Naive thymus-derived CD4-positive, alpha-beta T cell (primary cell): ENCODE measurements at regions of chr12 and their contacts with region 1.

Region 1: DNA sequence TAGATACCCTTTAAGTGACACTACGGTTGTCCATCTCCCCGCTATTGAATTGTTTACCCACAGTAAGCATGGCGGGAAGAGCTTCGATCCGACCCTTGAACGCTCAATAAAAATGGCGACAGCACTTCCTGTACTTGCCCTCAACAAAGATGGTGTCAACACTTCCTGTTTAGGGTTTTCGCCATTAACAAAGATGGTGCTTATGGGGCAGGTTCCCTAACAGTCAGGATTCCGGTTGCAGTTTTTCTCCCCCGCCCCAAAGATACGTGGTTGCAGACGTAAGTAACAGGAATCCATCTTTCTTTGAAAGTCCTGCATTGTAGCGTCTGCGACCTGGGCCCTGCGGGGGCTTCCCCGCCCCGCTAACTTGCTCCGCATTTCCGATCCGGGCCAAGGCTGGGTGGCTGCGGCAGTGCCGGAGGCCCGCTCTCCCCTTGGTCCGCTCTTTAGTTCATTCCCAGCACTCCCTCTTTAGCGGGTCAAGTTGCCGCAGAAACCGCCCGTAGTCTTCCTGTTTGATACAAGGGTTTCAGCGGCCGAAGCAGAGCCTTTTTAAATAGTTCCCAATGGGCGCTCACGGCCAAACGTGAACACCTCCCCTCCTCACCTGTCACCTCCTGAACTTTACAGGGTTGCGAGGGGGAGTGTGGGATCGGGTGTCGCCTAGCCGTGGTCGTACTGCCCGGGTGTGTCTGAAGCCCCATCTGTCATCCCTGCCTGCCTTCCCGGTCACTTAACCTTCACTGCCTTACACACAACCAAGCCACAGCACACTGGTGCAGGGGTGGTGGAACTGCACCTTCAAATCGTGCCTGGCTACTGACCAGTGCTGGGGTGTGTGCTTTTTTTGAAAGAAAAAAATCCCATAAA is at the start of gene CRADD:
- DNase-seq: peak; percentile 75 to 97 (median 95)
- ATAC-seq: peak; percentile 95
- H3K4me3 ChIP-seq: peak within 1 kb of the TSS; percentile 93
- H3K4me3 Mint-ChIP-seq: peak within 1 kb of the TSS; percentile 82 to 100 (median 98)
- H3K27ac ChIP-seq: peak within 1 kb of the TSS; percentile 99
- H3K27ac Mint-ChIP-seq: peak within 1 kb of the TSS; percentile 97 to 100 (median 100)
- H3K4me1 ChIP-seq: peaks cover 5 to 9% of the 10 kb centered on the region in 2 donors
- H3K4me1 Mint-ChIP-seq: peaks cover 19 to 56% (median 41%) of the 10 kb centered on the region in 7 donors
- H3K27me3 ChIP-seq: no peaks in the 10 kb centered on the region
- H3K27me3 Mint-ChIP-seq: peaks cover 2 to 13% (median 9%) of the 10 kb centered on the region in 5 donors
- total RNA-seq, gene CRADD: 11.4 to 17.1 (median 13.8) TPM

Region 2: DNA sequence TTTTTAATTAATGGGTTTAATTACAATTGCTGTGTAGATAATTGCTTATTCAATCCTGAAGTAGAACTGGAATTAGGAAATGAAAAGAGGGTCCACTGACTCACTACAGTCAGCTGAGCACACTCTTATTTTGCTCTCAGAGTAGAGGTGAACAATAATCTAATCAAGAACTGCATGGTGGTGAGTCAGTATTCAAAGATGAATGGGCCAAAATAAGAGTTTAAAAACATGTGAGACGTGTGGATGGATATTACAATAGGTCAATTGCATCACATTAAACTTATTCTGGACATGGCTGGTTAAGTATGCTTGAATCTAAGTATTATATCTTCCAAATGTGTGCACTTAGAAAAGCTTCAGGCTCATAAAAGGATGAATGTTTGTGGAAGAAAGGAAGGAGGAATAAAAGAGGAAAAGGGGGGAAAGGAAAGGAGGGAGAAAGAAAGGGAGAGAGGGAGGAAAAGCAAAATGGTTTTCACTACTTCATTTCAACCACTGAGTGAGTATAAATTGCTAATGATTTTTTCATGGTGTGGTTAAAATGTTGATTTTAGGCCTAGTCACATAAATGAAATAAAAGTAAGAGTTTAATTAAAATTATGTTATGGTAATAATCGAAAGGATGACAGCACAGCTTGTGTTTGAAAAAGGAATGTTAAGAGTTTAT is 721.3 kb before region 1 on chr12:
- CTCF ChIA-PET with region 1: no interaction called
- POLR2A ChIA-PET with region 1: no interaction called
- intact Hi-C with region 1: no loop called
- DNase-seq: no peak
- ATAC-seq: no peak
- H3K4me3 ChIP-seq: no peak overlapping the region
- H3K4me3 Mint-ChIP-seq: no peak overlapping the region
- H3K27ac ChIP-seq: no peak overlapping the region
- H3K27ac Mint-ChIP-seq: no peak overlapping the region
- H3K4me1 ChIP-seq: no peaks in the 10 kb centered on the region
- H3K4me1 Mint-ChIP-seq: no peaks in the 10 kb centered on the region
- H3K27me3 ChIP-seq: no peaks in the 10 kb centered on the region
- H3K27me3 Mint-ChIP-seq: no peaks in the 10 kb centered on the region

Region 3: GRCh38 chr12:93378373-93379325 is 298.8 kb before region 1 on chr12:
- CTCF ChIA-PET with region 1: no interaction called
- POLR2A ChIA-PET with region 1: no interaction called
- intact Hi-C with region 1: loop called (anchors 1 to 5 kb)
- DNase-seq: peak; percentile 47 to 73 (median 69)
- ATAC-seq: peak; percentile 60
- H3K4me3 ChIP-seq: peak overlapping the region; percentile 76
- H3K4me3 Mint-ChIP-seq: peak overlapping the region; percentile 98 to 100 (median 99)
- H3K27ac ChIP-seq: peak overlapping the region; percentile 94
- H3K27ac Mint-ChIP-seq: peak overlapping the region; percentile 94 to 100 (median 99)
- H3K4me1 ChIP-seq: peaks cover 19 to 22% of the 10 kb centered on the region in 2 donors
- H3K4me1 Mint-ChIP-seq: peaks cover 34 to 62% (median 51%) of the 10 kb centered on the region in 7 donors
- H3K27me3 ChIP-seq: no peaks in the 10 kb centered on the region
- H3K27me3 Mint-ChIP-seq: no peaks in the 10 kb centered on the region

Region 4: DNA sequence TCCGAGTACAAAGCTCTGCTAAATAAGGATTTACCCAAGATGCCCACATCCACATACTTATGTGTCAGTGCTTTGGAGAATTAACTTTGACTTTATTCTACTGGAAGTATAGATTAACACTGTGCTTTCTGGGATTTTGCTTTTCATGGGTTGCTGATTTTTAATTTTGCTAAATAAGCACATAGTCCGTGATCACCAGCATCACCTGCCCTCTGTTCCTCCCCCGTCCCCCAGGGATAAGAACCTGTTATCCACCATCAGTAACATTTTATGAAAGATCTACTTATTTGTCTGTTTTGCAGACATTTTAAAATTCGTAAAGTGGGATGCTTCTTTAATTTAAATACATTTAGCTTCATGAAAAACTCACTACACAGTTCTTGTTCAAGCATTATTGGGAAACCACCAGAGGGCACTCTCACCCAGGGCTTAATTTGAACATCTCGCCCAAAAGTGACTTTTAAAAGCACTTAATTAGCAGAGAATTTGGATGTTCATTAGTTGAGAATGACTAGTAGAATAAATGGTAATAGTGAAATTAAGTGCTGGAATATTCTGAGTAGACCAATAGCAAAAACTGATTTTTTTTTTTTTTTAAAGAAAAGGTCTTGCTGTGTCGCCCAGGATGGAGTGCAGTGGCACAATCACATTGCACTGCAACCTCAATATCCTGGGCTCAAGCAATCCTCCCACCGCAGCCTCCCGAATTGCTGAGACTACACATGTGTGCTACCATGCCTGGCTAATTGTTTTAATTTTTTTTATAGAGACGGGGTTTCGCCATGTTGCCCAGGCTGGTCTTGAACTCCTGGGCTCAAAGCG is 174.4 kb before region 1 on chr12:
- CTCF ChIA-PET with region 1: no interaction called
- POLR2A ChIA-PET with region 1: no interaction called
- intact Hi-C with region 1: loop called in 1 of 2 experiments (anchors 5 kb)
- DNase-seq: peak; percentile 16 to 71 (median 54)
- ATAC-seq: peak; percentile 67
- H3K4me3 ChIP-seq: no peak overlapping the region
- H3K4me3 Mint-ChIP-seq: no peak overlapping the region
- H3K27ac ChIP-seq: no peak overlapping the region
- H3K27ac Mint-ChIP-seq: peak overlapping the region in 3 of 9 donors; percentile 36 to 69 (median 60)
- H3K4me1 ChIP-seq: no peaks in the 10 kb centered on the region
- H3K4me1 Mint-ChIP-seq: peaks cover 0 to 29% (median 0%) of the 10 kb centered on the region in 7 donors
- H3K27me3 ChIP-seq: no peaks in the 10 kb centered on the region
- H3K27me3 Mint-ChIP-seq: no peaks in the 10 kb centered on the region

Region 5: DNA sequence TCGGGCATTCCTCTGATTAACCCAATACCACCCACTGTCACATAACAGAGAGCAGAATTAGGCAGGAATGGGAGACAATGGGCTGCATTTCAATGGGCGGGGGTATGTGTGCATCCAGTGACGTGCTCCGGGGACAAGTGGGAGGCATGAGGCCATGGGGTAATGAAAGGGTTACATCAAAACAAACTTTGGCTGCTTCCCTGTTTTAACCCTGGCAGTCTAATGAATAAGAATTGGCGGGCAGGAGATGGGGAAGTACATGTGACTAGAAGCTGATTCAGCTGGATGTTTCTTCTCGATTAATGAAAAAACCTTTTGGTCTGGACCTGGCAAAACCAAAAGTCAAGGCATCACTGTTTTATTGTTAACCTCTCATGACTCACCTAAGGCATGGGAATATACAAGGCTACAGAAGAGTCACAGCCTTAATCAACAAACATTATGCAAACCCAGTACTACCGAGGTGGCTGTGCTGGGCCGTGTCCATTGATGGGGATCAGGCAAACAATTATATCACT is 60.8 kb before region 1 on chr12:
- CTCF ChIA-PET with region 1: no interaction called
- POLR2A ChIA-PET with region 1: no interaction called
- intact Hi-C with region 1: no loop called
- DNase-seq: no peak
- ATAC-seq: no peak
- H3K4me3 ChIP-seq: no peak overlapping the region
- H3K4me3 Mint-ChIP-seq: no peak overlapping the region
- H3K27ac ChIP-seq: no peak overlapping the region
- H3K27ac Mint-ChIP-seq: no peak overlapping the region
- H3K4me1 ChIP-seq: no peaks in the 10 kb centered on the region
- H3K4me1 Mint-ChIP-seq: peaks cover 0 to 2% (median 0%) of the 10 kb centered on the region in 7 donors
- H3K27me3 ChIP-seq: peaks cover 0 to 4% of the 10 kb centered on the region in 2 donors
- H3K27me3 Mint-ChIP-seq: peaks cover 0 to 22% (median 8%) of the 10 kb centered on the region in 5 donors

Region 6: DNA sequence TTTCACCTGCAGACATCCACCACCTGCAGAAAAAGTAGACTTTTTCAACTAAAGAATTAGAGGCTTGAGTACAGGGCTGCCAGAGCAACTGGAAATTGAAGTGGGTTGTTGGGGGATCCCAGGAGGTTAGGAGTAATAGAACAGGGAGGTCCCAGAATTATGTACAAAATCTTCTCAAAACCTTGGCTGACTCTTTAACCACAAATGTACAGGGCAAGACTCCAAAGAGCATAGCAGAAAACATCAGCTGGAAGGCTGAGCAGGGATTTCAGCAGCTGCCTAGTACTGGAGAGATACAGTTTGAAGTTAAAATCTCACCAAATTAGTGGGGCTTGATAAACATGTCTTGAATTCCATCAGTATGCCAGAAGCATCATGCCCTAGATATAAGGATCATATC is 191.3 kb after region 1 on chr12:
- CTCF ChIA-PET with region 1: no interaction called
- POLR2A ChIA-PET with region 1: no interaction called
- intact Hi-C with region 1: no loop called
- DNase-seq: no peak
- ATAC-seq: no peak
- H3K4me3 ChIP-seq: no peak overlapping the region
- H3K4me3 Mint-ChIP-seq: no peak overlapping the region
- H3K27ac ChIP-seq: no peak overlapping the region
- H3K27ac Mint-ChIP-seq: no peak overlapping the region
- H3K4me1 ChIP-seq: no peaks in the 10 kb centered on the region
- H3K4me1 Mint-ChIP-seq: no peaks in the 10 kb centered on the region
- H3K27me3 ChIP-seq: no peaks in the 10 kb centered on the region
- H3K27me3 Mint-ChIP-seq: peaks cover 0 to 20% (median 0%) of the 10 kb centered on the region in 5 donors

Region 7: GRCh38 chr12:93879476-93880421 is 202.3 kb after region 1 on chr12:
- CTCF ChIA-PET with region 1: no interaction called
- POLR2A ChIA-PET with region 1: no interaction called
- intact Hi-C with region 1: loop called in 1 of 2 experiments (anchors 1 kb)
- DNase-seq: no peak
- ATAC-seq: no peak
- H3K4me3 ChIP-seq: no peak overlapping the region
- H3K4me3 Mint-ChIP-seq: peak overlapping the region in 5 of 10 donors; percentile 5 to 71 (median 39)
- H3K27ac ChIP-seq: no peak overlapping the region
- H3K27ac Mint-ChIP-seq: peak overlapping the region in 8 of 9 donors; percentile 53 to 94 (median 72)
- H3K4me1 ChIP-seq: peaks cover 0 to 9% of the 10 kb centered on the region in 2 donors
- H3K4me1 Mint-ChIP-seq: peaks cover 7 to 39% (median 19%) of the 10 kb centered on the region in 7 donors
- H3K27me3 ChIP-seq: no peaks in the 10 kb centered on the region
- H3K27me3 Mint-ChIP-seq: peaks cover 0 to 3% (median 0%) of the 10 kb centered on the region in 5 donors

Region 8: GRCh38 chr12:94074980-94075928 is 397.8 kb after region 1 on chr12:
- CTCF ChIA-PET with region 1: no interaction called
- POLR2A ChIA-PET with region 1: interaction called, 5 read pairs
- intact Hi-C with region 1: loop called in 1 of 2 experiments (anchors 10 kb)
- DNase-seq: peak in 1 of 9 donors; percentile 20
- ATAC-seq: peak; percentile 67
- H3K4me3 ChIP-seq: no peak overlapping the region
- H3K4me3 Mint-ChIP-seq: no peak overlapping the region
- H3K27ac ChIP-seq: no peak overlapping the region
- H3K27ac Mint-ChIP-seq: no peak overlapping the region
- H3K4me1 ChIP-seq: peaks cover 0 to 20% of the 10 kb centered on the region in 2 donors
- H3K4me1 Mint-ChIP-seq: peaks cover 18 to 67% (median 28%) of the 10 kb centered on the region in 7 donors
- H3K27me3 ChIP-seq: no peaks in the 10 kb centered on the region
- H3K27me3 Mint-ChIP-seq: peaks cover 0 to 6% (median 3%) of the 10 kb centered on the region in 5 donors

Region 9: DNA sequence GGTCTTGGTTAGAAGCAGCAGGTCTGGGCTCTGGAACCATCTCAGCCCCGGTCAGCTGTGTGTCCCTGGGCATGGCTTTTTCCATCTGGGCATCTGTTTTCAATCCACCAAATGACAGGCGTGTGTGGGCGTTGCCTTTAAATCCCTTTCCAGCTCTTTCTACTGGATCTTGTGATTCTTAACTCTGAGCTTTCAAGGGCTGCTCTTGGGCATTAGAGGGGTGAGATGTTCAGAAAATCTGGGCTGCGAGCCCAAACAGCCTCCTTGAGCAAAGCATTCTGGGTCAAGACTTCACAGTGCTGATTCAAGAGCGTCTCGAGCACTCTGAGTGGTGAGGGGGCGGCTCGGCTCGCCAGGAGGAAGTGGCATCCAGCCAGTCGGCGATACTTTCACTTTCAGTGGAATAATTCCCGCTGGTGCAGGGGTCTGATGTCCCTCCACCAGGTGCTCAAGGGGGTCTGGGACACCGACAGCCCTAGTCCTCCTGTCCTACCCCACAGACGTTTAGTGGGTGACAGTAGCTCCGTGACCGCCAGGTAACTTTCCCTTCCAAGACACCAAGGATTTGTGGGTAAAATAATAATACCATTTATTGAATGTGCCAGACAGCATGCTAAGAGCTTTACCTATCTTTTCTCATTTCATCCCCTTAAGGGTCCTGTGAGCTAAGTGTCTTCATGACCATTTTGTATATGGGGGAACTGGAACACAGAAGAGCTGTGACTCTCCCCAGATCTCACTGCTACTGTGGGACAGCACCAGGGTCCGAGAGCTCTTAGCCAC is 585.0 kb after region 1 on chr12:
- CTCF ChIA-PET with region 1: no interaction called
- POLR2A ChIA-PET with region 1: no interaction called
- intact Hi-C with region 1: loop called in 1 of 2 experiments (anchors 1 kb)
- DNase-seq: peak; percentile 50 to 81 (median 72)
- ATAC-seq: peak; percentile 89
- H3K4me3 ChIP-seq: peak overlapping the region; percentile 94
- H3K4me3 Mint-ChIP-seq: peak overlapping the region; percentile 80 to 99 (median 97)
- H3K27ac ChIP-seq: peak overlapping the region; percentile 91
- H3K27ac Mint-ChIP-seq: peak overlapping the region; percentile 91 to 100 (median 99)
- H3K4me1 ChIP-seq: peaks cover 15 to 18% of the 10 kb centered on the region in 2 donors
- H3K4me1 Mint-ChIP-seq: peaks cover 23 to 52% (median 46%) of the 10 kb centered on the region in 7 donors
- H3K27me3 ChIP-seq: no peaks in the 10 kb centered on the region
- H3K27me3 Mint-ChIP-seq: no peaks in the 10 kb centered on the region

Region 10: GRCh38 chr12:95083938-95084337 is 1406.5 kb after region 1 on chr12:
- CTCF ChIA-PET with region 1: no interaction called
- POLR2A ChIA-PET with region 1: no interaction called
- intact Hi-C with region 1: no loop called
- DNase-seq: no peak
- ATAC-seq: no peak
- H3K4me3 ChIP-seq: no peak overlapping the region
- H3K4me3 Mint-ChIP-seq: no peak overlapping the region
- H3K27ac ChIP-seq: no peak overlapping the region
- H3K27ac Mint-ChIP-seq: no peak overlapping the region
- H3K4me1 ChIP-seq: no peaks in the 10 kb centered on the region
- H3K4me1 Mint-ChIP-seq: no peaks in the 10 kb centered on the region
- H3K27me3 ChIP-seq: no peaks in the 10 kb centered on the region
- H3K27me3 Mint-ChIP-seq: peaks cover 0 to 12% (median 0%) of the 10 kb centered on the region in 5 donors

Region 11: DNA sequence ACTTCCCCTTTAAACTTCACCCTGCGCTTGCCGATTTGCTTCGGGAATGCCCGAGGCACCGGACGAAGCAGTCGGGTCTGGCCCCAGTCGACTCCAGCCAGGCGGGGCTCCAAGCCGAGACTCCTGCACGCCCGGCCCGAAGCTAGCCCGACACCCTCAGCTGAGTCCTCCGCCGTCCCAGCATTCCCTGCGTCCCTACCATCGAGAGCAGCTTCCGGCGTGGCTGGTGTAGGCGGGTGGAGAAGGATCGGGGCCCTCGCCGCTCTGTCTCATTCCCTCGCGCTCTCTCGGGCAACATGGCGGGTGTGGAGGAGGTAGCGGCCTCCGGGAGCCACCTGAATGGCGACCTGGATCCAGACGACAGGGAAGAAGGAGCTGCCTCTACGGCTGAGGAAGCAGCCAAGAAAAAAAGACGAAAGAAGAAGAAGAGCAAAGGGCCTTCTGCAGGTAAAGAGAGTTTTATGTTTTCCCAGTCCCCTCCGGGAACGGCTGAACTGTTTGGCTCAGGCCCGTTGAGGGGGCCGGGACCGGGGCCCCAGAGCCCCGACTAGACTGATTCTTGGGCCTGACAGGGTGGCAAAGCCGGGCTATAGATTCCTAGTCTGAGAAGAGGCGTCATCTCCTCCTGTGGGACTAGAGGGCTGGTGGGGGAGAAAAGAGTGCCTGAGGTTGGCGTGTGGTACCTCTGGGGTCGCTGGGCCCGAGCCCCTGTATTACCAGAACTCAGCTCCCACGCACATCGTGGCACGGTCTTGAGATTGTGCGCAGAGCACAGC is 1796.6 kb after region 1 on chr12 and contains the start of gene METAP2:
- CTCF ChIA-PET with region 1: no interaction called
- POLR2A ChIA-PET with region 1: interaction called, 3 read pairs
- intact Hi-C with region 1: loop called in 1 of 2 experiments (anchors 2 kb)
- DNase-seq: peak; percentile 75 to 93 (median 87)
- ATAC-seq: peak; percentile 98
- H3K4me3 ChIP-seq: peak within 1 kb of the TSS; percentile 81
- H3K4me3 Mint-ChIP-seq: peak within 1 kb of the TSS; percentile 96 to 100 (median 99)
- H3K27ac ChIP-seq: peak within 1 kb of the TSS; percentile 92
- H3K27ac Mint-ChIP-seq: peak within 1 kb of the TSS; percentile 95 to 100 (median 99)
- H3K4me1 ChIP-seq: peaks cover 10 to 39% of the 10 kb centered on the region in 2 donors
- H3K4me1 Mint-ChIP-seq: peaks cover 31 to 70% (median 55%) of the 10 kb centered on the region in 7 donors
- H3K27me3 ChIP-seq: no peaks in the 10 kb centered on the region
- H3K27me3 Mint-ChIP-seq: no peaks in the 10 kb centered on the region
- total RNA-seq, gene METAP2: 48.2 to 79.9 (median 57.3) TPM